RWPE1 (cell line): ENCODE measurements at regions of chr11 and their contacts with region 1.

Region 1: GRCh38 chr11:66386171-66387069 is 14.9 kb upstream of the SLC29A2 start:
- DNase-seq: peak; percentile 49
- H3K27ac ChIP-seq: no peak overlapping the region
- CTCF ChIP-seq: peak; percentile 91

Region 2: DNA sequence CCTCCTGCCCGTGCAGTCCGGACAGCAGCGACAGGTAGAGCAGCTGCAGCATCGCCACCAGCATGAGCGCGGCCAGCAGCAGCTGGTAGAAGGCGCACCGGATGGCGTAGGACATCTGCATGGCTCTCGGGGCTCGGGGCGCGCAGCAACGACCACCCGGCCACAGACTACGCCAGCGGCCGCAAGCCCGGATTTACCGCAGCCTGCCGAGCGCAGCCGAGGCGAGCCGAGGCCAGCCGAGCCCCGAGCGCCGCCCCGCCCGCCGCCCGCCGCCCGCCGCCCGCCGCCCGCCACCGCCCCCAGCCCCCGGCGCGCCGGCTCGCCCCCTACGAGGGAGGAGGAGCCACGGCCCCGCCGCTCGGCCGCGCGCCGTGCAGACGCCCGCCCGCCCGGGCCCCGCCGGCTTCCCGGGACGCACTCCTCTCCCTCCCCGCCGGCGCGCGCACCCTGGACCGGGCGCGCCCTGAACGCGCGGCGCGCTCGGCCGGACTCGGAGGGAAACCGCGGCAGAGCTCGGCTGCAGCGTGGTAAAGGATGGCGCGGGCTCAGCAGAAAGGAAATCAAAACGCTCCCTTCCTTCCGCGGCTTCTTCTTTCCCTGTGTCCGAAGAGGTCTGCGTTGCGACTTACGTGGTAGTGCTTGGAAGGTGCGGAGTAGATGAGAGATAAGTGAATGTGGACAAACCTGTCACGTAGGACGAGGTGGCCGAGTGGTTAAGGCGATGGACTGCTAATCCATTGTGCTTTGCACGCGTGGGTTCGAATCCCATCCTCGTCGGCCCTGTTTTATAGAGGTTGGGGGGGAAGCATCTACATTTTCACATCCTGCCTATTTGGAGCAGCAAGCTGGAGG is 38.8 kb before region 1 on chr11 and contains the start of gene B4GAT1:
- CTCF ChIA-PET with region 1: interaction called, 10 read pairs
- POLR2A ChIA-PET with region 1: interaction called, 7 read pairs
- DNase-seq: peak; percentile 68
- H3K27ac ChIP-seq: peak within 1 kb of the TSS; percentile 92
- CTCF ChIP-seq: no peak

Region 3: DNA sequence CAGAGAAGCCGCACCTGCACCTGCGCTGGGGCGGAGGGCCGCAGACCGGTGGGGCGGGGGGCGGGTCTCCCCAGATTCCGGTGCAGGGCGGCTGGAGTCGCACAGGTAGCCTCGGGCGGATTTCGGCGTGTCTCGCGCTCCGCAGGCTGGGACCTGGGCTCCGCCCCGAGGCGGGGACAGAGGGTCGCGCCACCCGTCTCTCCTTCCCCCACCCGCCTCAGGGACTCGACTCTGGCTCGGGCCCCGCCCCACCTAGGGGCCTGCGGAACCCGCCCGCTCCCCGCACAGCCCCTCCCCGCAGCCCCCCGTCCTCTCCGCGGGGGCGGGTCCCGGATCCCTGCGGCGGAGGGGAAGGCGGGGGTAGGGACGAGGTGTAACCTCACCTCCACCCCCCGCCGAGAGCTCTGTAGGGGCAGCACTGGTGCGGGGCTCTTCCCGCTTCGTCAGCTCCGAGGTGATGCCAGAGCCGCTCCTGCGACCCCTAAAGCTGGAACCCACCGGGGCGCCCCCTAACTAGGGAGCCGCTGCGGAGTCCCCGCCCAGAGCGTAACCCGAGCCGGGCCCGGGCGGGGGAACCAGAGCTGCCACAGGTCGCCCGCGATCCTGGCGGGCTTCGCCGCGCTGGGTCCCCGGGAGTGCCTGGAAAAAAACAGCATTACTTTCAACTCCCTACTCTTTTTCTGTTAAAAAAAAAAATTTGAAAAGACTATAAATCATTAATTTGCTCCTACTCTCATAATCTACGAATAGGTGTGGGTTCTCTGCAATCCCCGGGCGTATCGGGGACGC is 14.6 kb before region 1 on chr11 and contains the start of gene SLC29A2:
- CTCF ChIA-PET with region 1: interaction called, 10 read pairs
- POLR2A ChIA-PET with region 1: interaction called, 3 read pairs
- DNase-seq: peak; percentile 64
- H3K27ac ChIP-seq: peak within 1 kb of the TSS; percentile 85
- CTCF ChIP-seq: no peak